ENCODE measurements at regions of chr11 and their contacts with region 1.

Region 1: GRCh38 chr11:121494355-121495099 is 41.8 kb upstream of the SORL1-AS1 start:
- DNase-seq: peak in 4 of 14 experiments; percentile 24 to 52 (median 37)
- ATAC-seq: peak; percentile 77
- H3K4me3 ChIP-seq: no peak overlapping the region
- H3K4me3 Mint-ChIP-seq: peak overlapping the region; percentile 4
- H3K27ac ChIP-seq: peak overlapping the region in 1 of 2 donors; percentile 15
- H3K27ac Mint-ChIP-seq: peak overlapping the region; percentile 76
- H3K4me1 ChIP-seq: peaks cover 16% of the 10 kb centered on the region
- H3K4me1 Mint-ChIP-seq: peaks cover 68% of the 10 kb centered on the region
- H3K27me3 ChIP-seq: no peaks in the 10 kb centered on the region
- H3K27me3 Mint-ChIP-seq: no peaks in the 10 kb centered on the region
- CTCF ChIP-seq: no peak

Region 2: DNA sequence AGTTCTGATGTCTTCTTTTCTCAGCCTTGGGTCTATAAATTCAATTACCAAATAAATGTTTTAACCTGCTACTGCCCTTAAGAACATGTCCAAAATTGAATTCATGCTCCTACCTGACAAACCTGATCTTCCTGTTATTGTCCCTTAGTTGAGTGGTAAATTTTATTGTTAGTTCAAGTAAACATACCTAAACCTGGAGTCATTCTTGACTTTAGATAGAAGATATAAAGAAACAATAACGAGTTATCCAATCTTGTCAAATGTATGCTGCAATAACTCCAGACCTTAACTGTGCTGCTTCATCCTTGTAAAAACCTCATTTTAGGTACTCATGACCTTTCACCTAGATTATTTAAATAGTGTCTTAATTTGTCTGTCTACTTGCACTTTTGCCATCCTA is 236.5 kb before region 1 on chr11:
- CTCF ChIA-PET with region 1: no interaction called
- POLR2A ChIA-PET with region 1: no interaction called
- intact Hi-C with region 1: no loop called
- DNase-seq: no peak
- ATAC-seq: no peak
- H3K4me3 ChIP-seq: no peak overlapping the region
- H3K4me3 Mint-ChIP-seq: no peak overlapping the region
- H3K27ac ChIP-seq: no peak overlapping the region
- H3K27ac Mint-ChIP-seq: no peak overlapping the region
- H3K4me1 ChIP-seq: no peaks in the 10 kb centered on the region
- H3K4me1 Mint-ChIP-seq: no peaks in the 10 kb centered on the region
- H3K27me3 ChIP-seq: no peaks in the 10 kb centered on the region
- H3K27me3 Mint-ChIP-seq: peaks cover 4% of the 10 kb centered on the region
- CTCF ChIP-seq: no peak

Region 3: GRCh38 chr11:121534131-121535093 is 39.9 kb after region 1 on chr11:
- CTCF ChIA-PET with region 1: no interaction called
- POLR2A ChIA-PET with region 1: no interaction called
- intact Hi-C with region 1: loop called in 1 of 2 experiments (anchors 5 kb)
- DNase-seq: no peak
- ATAC-seq: no peak
- H3K4me3 ChIP-seq: no peak overlapping the region
- H3K4me3 Mint-ChIP-seq: no peak overlapping the region
- H3K27ac ChIP-seq: peak overlapping the region in 1 of 2 donors; percentile 1
- H3K27ac Mint-ChIP-seq: peak overlapping the region; percentile 53
- H3K4me1 ChIP-seq: no peaks in the 10 kb centered on the region
- H3K4me1 Mint-ChIP-seq: peaks cover 64% of the 10 kb centered on the region
- H3K27me3 ChIP-seq: no peaks in the 10 kb centered on the region
- H3K27me3 Mint-ChIP-seq: no peaks in the 10 kb centered on the region
- CTCF ChIP-seq: no peak

Region 4: DNA sequence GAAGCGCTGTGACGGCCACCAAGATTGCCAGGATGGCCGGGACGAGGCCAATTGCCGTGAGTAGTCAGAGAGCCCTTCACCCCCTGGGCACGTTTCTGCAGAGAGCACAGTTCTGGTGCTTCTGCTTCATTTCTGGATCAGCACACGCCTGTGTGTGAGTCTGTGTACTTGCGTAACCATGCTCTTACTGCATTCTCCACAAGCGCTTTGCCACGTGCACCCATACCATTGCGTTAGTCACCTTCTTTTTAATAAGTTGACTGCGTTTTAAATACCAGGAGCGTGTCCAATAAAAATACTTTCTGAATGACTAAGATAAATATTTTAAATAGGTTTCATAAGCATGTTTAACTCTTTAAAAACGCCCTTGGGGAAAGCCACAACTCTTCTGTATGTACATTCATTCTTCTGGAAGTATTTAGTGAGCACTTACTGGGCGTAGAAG is 101.2 kb after region 1 on chr11:
- CTCF ChIA-PET with region 1: no interaction called
- POLR2A ChIA-PET with region 1: no interaction called
- intact Hi-C with region 1: no loop called
- DNase-seq: no peak
- ATAC-seq: no peak
- H3K4me3 ChIP-seq: no peak overlapping the region
- H3K4me3 Mint-ChIP-seq: no peak overlapping the region
- H3K27ac ChIP-seq: no peak overlapping the region
- H3K27ac Mint-ChIP-seq: no peak overlapping the region
- H3K4me1 ChIP-seq: peaks cover 5% of the 10 kb centered on the region
- H3K4me1 Mint-ChIP-seq: peaks cover 20% of the 10 kb centered on the region
- H3K27me3 ChIP-seq: no peaks in the 10 kb centered on the region
- H3K27me3 Mint-ChIP-seq: no peaks in the 10 kb centered on the region
- CTCF ChIP-seq: no peak

Measured in CD4-positive, alpha-beta T cell (primary cell).